AG04450 (cell line): ENCODE measurements at regions of chr1 and their contacts with region 1.

Region 1: DNA sequence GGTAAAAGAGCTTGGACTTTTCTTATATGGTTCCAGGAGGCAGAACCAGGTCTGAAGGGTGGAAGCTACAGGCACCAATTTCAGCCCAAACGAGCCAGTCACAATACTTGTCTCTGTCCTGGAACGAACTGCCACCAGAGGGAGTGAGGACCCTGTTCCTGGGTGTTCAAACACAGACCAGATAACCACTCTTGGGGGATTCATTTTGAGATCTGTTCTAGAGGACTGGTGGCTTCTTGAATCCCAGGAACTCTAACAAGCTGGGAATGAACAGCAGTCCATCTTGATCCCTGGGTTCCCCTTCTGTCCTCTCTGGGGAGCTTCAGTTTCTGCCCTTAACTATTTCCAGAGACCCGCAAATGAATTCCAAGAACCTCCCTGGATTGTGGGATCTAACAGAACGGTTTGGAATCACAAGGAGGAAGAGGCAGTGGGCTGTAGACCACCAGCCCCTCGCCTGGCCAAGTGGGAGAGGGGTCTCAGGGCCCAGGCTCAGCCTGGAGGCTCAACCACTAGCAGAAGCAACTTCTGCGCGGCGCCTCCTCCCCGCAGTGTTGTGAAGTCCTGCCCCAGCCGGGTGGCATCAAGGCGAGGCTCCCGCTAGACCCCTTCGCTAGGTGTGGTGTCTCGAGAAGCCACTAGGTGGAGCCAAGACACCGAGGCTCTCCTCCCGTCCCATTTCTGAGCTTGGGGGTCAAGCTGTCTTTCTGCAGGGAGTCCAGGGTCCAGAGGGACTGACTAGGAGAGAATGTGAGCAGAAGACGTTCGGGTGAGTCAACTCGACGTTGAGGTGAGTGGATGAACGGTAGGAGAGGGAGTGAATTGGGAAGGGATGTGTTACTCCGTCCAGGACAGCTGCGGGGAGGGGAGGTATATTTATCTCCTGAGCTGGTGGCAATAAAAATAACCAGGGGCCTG is 12.1 kb upstream of the NES start:
- DNase-seq: peak; percentile 65
- H3K4me3 ChIP-seq: peak overlapping the region; percentile 44
- H3K27ac ChIP-seq: no peak overlapping the region
- H3K27me3 ChIP-seq: no peaks in the 10 kb centered on the region
- CTCF ChIP-seq: peak; percentile 93

Region 2: GRCh38 chr1:156560585-156561183 is 128.6 kb before region 1 on chr1:
- CTCF ChIA-PET with region 1: no interaction called
- POLR2A ChIA-PET with region 1: no interaction called
- DNase-seq: no peak
- H3K4me3 ChIP-seq: no peak overlapping the region
- H3K27ac ChIP-seq: no peak overlapping the region
- H3K27me3 ChIP-seq: no peaks in the 10 kb centered on the region
- CTCF ChIP-seq: no peak

Region 3: GRCh38 chr1:156641761-156642264 is 47.5 kb before region 1 on chr1 and contains the start of gene BCAN:
- CTCF ChIA-PET with region 1: interaction called, 10 read pairs
- POLR2A ChIA-PET with region 1: no interaction called
- DNase-seq: no peak
- H3K4me3 ChIP-seq: peak within 1 kb of the TSS; percentile 37
- H3K27ac ChIP-seq: no peak within 1 kb of the TSS
- H3K27me3 ChIP-seq: peaks cover 91% of the 10 kb centered on the region
- CTCF ChIP-seq: no peak
- polyA plus RNA-seq, gene BCAN: 0.05 TPM in 1 of 2 replicates, not detected in the other

Region 4: GRCh38 chr1:156670791-156671190 is 18.5 kb before region 1 on chr1:
- CTCF ChIA-PET with region 1: interaction called, 108 read pairs
- POLR2A ChIA-PET with region 1: interaction called, 7 read pairs
- DNase-seq: no peak
- H3K4me3 ChIP-seq: no peak overlapping the region
- H3K27ac ChIP-seq: no peak overlapping the region
- H3K27me3 ChIP-seq: no peaks in the 10 kb centered on the region
- CTCF ChIP-seq: no peak

Region 5: GRCh38 chr1:156705918-156706656 is 16.8 kb after region 1 on chr1:
- CTCF ChIA-PET with region 1: interaction called, 233 read pairs
- POLR2A ChIA-PET with region 1: interaction called, 18 read pairs
- DNase-seq: no peak
- H3K4me3 ChIP-seq: peak overlapping the region; percentile 52
- H3K27ac ChIP-seq: peak overlapping the region; percentile 57
- H3K27me3 ChIP-seq: no peaks in the 10 kb centered on the region
- CTCF ChIP-seq: peak; percentile 76

Region 6: DNA sequence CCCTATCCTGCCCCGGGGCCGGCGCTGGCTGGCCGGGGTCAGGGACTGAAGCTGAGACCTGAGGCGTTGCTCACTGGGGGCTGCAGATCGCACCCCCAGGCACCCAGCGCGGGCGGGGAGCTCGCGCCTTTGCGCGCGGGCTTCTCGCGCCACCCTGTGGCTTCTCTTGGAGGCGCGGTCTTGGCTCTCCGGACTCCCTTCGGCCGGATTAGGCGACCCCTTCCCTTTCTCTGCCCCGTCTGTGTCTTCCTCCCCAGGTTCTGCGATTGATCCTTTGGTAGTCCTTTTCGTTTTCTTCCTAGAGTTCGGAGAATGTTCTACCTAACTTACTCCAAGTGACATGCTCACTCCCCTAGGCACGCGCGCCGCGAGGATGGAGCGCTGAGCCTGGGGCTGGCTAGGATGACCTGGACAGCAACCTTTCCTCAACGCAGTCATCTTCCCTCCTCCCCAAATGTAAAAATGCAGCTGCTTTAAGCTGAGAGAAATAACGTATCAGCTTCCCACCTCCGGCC is 170.9 kb after region 1 on chr1:
- CTCF ChIA-PET with region 1: interaction called, 62 read pairs
- POLR2A ChIA-PET with region 1: no interaction called
- DNase-seq: no peak
- H3K4me3 ChIP-seq: peak overlapping the region; percentile 32
- H3K27ac ChIP-seq: no peak overlapping the region
- H3K27me3 ChIP-seq: peaks cover 81% of the 10 kb centered on the region
- CTCF ChIP-seq: peak; percentile 78

Region 7: DNA sequence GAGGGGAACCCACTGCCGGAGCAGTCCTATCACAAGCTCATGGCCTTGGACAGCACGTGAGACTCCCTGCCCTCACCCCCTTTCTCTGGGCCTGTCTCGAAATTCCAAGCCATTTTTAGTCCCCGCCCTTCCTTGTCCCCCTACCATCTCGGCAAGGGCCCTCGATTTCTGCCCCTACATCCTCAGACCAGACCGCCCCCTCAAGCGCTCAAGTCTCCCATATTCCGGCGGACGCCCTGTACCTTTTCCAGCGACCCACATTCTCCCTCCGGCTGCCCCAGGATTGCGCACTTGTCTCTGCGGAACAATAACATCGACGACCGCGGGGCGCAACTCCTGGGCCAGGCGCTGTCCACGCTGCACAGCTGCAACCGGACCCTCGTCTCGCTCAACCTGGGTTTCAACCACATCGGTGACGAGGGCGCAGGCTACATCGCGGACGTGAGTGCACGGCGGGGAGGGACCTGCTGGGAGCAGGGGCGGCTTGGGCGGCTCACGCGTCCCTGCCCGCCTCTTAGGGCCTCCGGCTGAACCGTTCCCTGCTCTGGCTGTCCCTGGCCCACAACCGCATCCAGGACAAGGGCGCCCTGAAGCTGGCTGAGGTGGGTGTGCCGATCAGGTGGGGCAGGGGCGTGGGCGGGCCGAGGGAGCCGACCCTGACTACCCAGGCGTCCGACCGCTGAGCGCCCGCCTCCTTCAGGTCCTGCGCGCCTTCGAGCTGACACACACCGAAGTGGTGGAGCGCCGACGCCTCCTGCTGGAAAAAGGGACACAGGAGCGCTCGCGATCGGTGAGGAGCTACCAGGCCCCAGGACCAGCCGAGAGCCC is 238.1 kb after region 1 on chr1:
- CTCF ChIA-PET with region 1: interaction called, 31 read pairs
- POLR2A ChIA-PET with region 1: no interaction called
- DNase-seq: peak; percentile 26
- H3K4me3 ChIP-seq: peak overlapping the region; percentile 50
- H3K27ac ChIP-seq: no peak overlapping the region
- H3K27me3 ChIP-seq: peaks cover 47% of the 10 kb centered on the region
- CTCF ChIP-seq: peak; percentile 81

Region 8: GRCh38 chr1:157137408-157138219 is 448.3 kb after region 1 on chr1:
- CTCF ChIA-PET with region 1: no interaction called
- POLR2A ChIA-PET with region 1: no interaction called
- DNase-seq: no peak
- H3K4me3 ChIP-seq: peak overlapping the region; percentile 99
- H3K27ac ChIP-seq: peak overlapping the region; percentile 98
- H3K27me3 ChIP-seq: no peaks in the 10 kb centered on the region
- CTCF ChIP-seq: no peak